SK-N-SH (cell line): ENCODE measurements at regions of chr12 and their contacts with region 1.

Region 1: GRCh38 chr12:57726151-57726883 is 12.2 kb downstream of the AGAP2 start:
- DNase-seq: peak; percentile 96
- H3K4me3 ChIP-seq: peak overlapping the region; percentile 76 to 79
- H3K27ac ChIP-seq: peak overlapping the region; percentile 49 to 82; a peak in 3 of 4 replicates
- H3K4me1 ChIP-seq: peaks cover 0 to 8% of the 10 kb centered on the region in 2 experiments; a peak in 1 of 4 replicates
- H3K27me3 ChIP-seq: no peaks in the 10 kb centered on the region
- CTCF ChIP-seq: peak; percentile 86
- EP300 ChIP-seq: no peak
- RAD21 ChIP-seq: peak; percentile 56

Region 2: GRCh38 chr12:57693659-57694458 is 32.5 kb before region 1 on chr12 and contains the start of gene OS9:
- CTCF ChIA-PET with region 1: interaction called, 14 read pairs
- POLR2A ChIA-PET with region 1: interaction called, 3 read pairs
- DNase-seq: peak; percentile 90
- H3K4me3 ChIP-seq: peak within 1 kb of the TSS; percentile 90
- H3K27ac ChIP-seq: peak within 1 kb of the TSS in 1 of 2 experiments; percentile 59; a peak in 2 of 4 replicates
- H3K4me1 ChIP-seq: peaks cover 0 to 7% of the 10 kb centered on the region in 2 experiments; a peak in 2 of 4 replicates
- H3K27me3 ChIP-seq: no peaks in the 10 kb centered on the region
- CTCF ChIP-seq: peak; percentile 71
- EP300 ChIP-seq: no peak
- RAD21 ChIP-seq: peak; percentile 56
- polyA plus RNA-seq, gene OS9: 280 and 362 TPM in 2 replicates

Region 3: DNA sequence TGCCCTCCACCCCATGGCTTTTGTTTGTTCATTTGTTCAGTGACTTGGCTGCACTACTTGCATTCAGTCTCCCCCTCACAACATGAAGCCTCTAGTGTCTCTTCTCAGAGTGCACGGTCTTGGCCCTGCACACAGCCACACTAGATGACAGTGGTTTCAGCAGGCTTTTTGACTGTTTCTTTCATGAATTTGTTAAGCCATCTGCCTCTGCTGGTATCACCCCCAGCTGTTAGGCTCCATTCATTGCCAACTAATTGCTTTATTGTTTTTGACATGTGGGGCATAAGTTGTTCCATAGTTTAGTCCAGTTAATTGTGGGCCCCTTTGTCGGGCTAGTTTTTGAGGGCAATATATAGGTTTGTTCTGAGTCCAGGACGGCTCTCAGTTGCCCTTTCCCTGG is 13.6 kb before region 1 on chr12:
- CTCF ChIA-PET with region 1: interaction called, 17 read pairs
- POLR2A ChIA-PET with region 1: no interaction called
- DNase-seq: no peak
- H3K4me3 ChIP-seq: no peak overlapping the region
- H3K27ac ChIP-seq: no peak overlapping the region
- H3K4me1 ChIP-seq: no peaks in the 10 kb centered on the region
- H3K27me3 ChIP-seq: no peaks in the 10 kb centered on the region
- CTCF ChIP-seq: no peak
- EP300 ChIP-seq: no peak
- RAD21 ChIP-seq: no peak

Region 4: GRCh38 chr12:57744777-57745484 is 18.6 kb after region 1 on chr12 and contains the start of gene TSPAN31:
- CTCF ChIA-PET with region 1: interaction called, 15 read pairs
- POLR2A ChIA-PET with region 1: interaction called, 18 read pairs
- DNase-seq: peak; percentile 86
- H3K4me3 ChIP-seq: peak within 1 kb of the TSS; percentile 81 to 82
- H3K27ac ChIP-seq: peak within 1 kb of the TSS; percentile 96 to 98
- H3K4me1 ChIP-seq: peaks cover 0 to 17% of the 10 kb centered on the region in 2 experiments; a peak in 2 of 4 replicates
- H3K27me3 ChIP-seq: no peaks in the 10 kb centered on the region
- CTCF ChIP-seq: no peak
- EP300 ChIP-seq: no peak
- RAD21 ChIP-seq: no peak
- polyA plus RNA-seq, gene TSPAN31: 36.8 and 42.8 TPM in 2 replicates